K562 (cell line): ENCODE measurements at regions of chr2 and their contacts with region 1.

Region 1: GRCh38 chr2:205885492-205886099 is 200.4 kb downstream of the INO80D start:
- DNase-seq: peak; percentile 71 to 78 (median 73)
- ATAC-seq: peak; percentile 97
- H3K4me3 ChIP-seq: no peak overlapping the region
- H3K27ac ChIP-seq: no peak overlapping the region
- H3K4me1 ChIP-seq: no peaks in the 10 kb centered on the region
- H3K27me3 ChIP-seq: peaks cover 0 to 15% of the 10 kb centered on the region in 2 experiments; a peak in 2 of 5 replicates
- CTCF ChIP-seq: peak; percentile 77 to 90 (median 81)
- EP300 ChIP-seq: no peak
- POLR2A ChIP-seq: no peak
- RAD21 ChIP-seq: peak; percentile 61 to 75

Region 2: DNA sequence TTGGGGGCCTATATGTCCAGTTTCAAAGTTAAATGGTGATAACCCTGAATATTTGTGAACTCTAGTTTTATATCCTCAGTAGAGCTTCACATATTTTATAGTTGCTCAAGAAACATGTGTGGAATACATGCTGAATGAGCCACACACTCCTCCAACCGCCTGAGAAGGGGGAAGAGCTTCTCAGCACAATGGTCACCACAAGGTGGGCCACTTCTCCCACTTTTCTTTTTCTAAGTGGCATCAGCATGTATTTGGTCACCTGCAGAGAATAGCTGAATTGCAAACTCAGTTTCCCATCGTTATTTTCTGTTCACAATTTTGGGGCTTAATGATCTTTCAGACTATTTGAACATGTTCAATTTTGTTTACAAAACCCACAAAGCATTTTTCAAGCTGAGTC is 999.8 kb before region 1 on chr2:
- CTCF ChIA-PET with region 1: no interaction called
- POLR2A ChIA-PET with region 1: no interaction called
- in situ Hi-C with region 1: no loop called
- intact Hi-C with region 1: loop called (anchors 10 kb)
- DNase-seq: peak in 2 of 4 experiments; percentile 7 to 30
- ATAC-seq: peak; percentile 56; the same call in 1 of the 3 replicates
- H3K4me3 ChIP-seq: no peak overlapping the region
- H3K27ac ChIP-seq: no peak overlapping the region
- H3K4me1 ChIP-seq: no peaks in the 10 kb centered on the region
- H3K27me3 ChIP-seq: no peaks in the 10 kb centered on the region
- CTCF ChIP-seq: peak; percentile 16 to 34 (median 18); a peak in 2 of 6 replicates
- EP300 ChIP-seq: no peak
- POLR2A ChIP-seq: no peak
- RAD21 ChIP-seq: peak; percentile 36 to 62

Region 3: DNA sequence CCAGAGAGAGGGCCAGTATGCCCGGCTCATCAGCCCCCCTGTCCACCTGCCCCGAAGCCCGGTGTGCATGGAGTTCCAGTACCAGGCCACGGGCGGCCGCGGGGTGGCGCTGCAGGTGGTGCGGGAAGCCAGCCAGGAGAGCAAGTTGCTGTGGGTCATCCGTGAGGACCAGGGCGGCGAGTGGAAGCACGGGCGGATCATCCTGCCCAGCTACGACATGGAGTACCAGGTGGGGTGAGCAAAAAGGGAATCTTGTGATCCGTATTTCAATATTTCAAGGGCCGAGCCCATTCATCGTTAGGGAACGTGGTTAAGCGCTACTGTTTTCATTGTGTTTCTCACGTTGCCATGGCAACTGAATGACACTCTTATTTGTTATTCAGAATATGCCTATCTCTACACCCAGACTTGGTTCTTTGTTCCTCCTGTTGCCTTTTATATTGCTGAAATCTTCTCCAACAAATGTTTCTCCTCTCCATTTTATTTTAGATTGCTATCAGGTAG is 121.8 kb before region 1 on chr2:
- CTCF ChIA-PET with region 1: interaction called, 3 read pairs
- POLR2A ChIA-PET with region 1: no interaction called
- in situ Hi-C with region 1: no loop called
- intact Hi-C with region 1: loop called (anchors 5 kb)
- DNase-seq: peak; percentile 53 to 71 (median 62)
- ATAC-seq: peak; percentile 94
- H3K4me3 ChIP-seq: no peak overlapping the region
- H3K27ac ChIP-seq: no peak overlapping the region
- H3K4me1 ChIP-seq: peaks cover 0 to 4% of the 10 kb centered on the region in 2 experiments; a peak in 4 of 5 replicates
- H3K27me3 ChIP-seq: peaks cover 0 to 28% of the 10 kb centered on the region in 2 experiments; a peak in 3 of 5 replicates
- CTCF ChIP-seq: peak; percentile 46 to 73 (median 67)
- EP300 ChIP-seq: no peak
- POLR2A ChIP-seq: no peak
- RAD21 ChIP-seq: peak in 1 of 2 experiments; percentile 32; a peak in 1 of 4 replicates

Region 4: GRCh38 chr2:205776139-205776538 is 109.5 kb before region 1 on chr2:
- CTCF ChIA-PET with region 1: no interaction called
- POLR2A ChIA-PET with region 1: no interaction called
- in situ Hi-C with region 1: no loop called
- intact Hi-C with region 1: loop called (anchors 2 kb)
- DNase-seq: peak; percentile 45 to 71 (median 61)
- ATAC-seq: peak; percentile 95
- H3K4me3 ChIP-seq: no peak overlapping the region
- H3K27ac ChIP-seq: no peak overlapping the region
- H3K4me1 ChIP-seq: peaks cover 0 to 3% of the 10 kb centered on the region in 2 experiments; a peak in 1 of 5 replicates
- H3K27me3 ChIP-seq: peaks cover 0 to 4% of the 10 kb centered on the region in 2 experiments; a peak in 1 of 5 replicates
- CTCF ChIP-seq: peak; percentile 62 to 73 (median 65)
- EP300 ChIP-seq: no peak
- POLR2A ChIP-seq: no peak
- RAD21 ChIP-seq: peak; percentile 54 to 64

Region 5: GRCh38 chr2:206212673-206213513 is 327.3 kb after region 1 on chr2:
- CTCF ChIA-PET with region 1: no interaction called
- POLR2A ChIA-PET with region 1: no interaction called
- in situ Hi-C with region 1: no loop called
- intact Hi-C with region 1: no loop called
- DNase-seq: no peak
- ATAC-seq: no peak
- H3K4me3 ChIP-seq: no peak overlapping the region
- H3K27ac ChIP-seq: no peak overlapping the region
- H3K4me1 ChIP-seq: no peaks in the 10 kb centered on the region
- H3K27me3 ChIP-seq: peaks cover 7 to 17% of the 10 kb centered on the region in 2 experiments; a peak in 4 of 5 replicates
- CTCF ChIP-seq: no peak
- EP300 ChIP-seq: no peak
- POLR2A ChIP-seq: no peak
- RAD21 ChIP-seq: no peak